IMR-90 (cell line): ENCODE measurements at regions of chr10 and their contacts with region 1.

Region 1: GRCh38 chr10:71957546-71958275 is 6.5 kb upstream of the CHST3 start:
- DNase-seq: no peak
- ATAC-seq: no peak
- H3K4me3 ChIP-seq: no peak overlapping the region
- H3K27ac ChIP-seq: no peak overlapping the region
- H3K4me1 ChIP-seq: no peaks in the 10 kb centered on the region
- H3K27me3 ChIP-seq: peaks cover 9% of the 10 kb centered on the region
- CTCF ChIP-seq: peak; percentile 28; the same call in 1 of the 2 replicates
- POLR2A ChIP-seq: no peak
- RAD21 ChIP-seq: no peak

Region 2: GRCh38 chr10:71899665-71900412 is 57.9 kb before region 1 on chr10:
- CTCF ChIA-PET with region 1: no interaction called
- POLR2A ChIA-PET with region 1: no interaction called
- dilution Hi-C with region 1: no loop called
- in situ Hi-C with region 1: no loop called
- intact Hi-C with region 1: loop called (anchors 5 kb)
- DNase-seq: no peak
- ATAC-seq: no peak
- H3K4me3 ChIP-seq: no peak overlapping the region
- H3K27ac ChIP-seq: no peak overlapping the region
- H3K4me1 ChIP-seq: no peaks in the 10 kb centered on the region
- H3K27me3 ChIP-seq: peaks cover 4% of the 10 kb centered on the region; the same call in 1 of the 2 replicates
- CTCF ChIP-seq: no peak
- POLR2A ChIP-seq: no peak
- RAD21 ChIP-seq: no peak

Region 3: GRCh38 chr10:71933651-71934050 is 24.1 kb before region 1 on chr10:
- CTCF ChIA-PET with region 1: no interaction called
- POLR2A ChIA-PET with region 1: no interaction called
- dilution Hi-C with region 1: no loop called
- in situ Hi-C with region 1: no loop called
- intact Hi-C with region 1: no loop called
- DNase-seq: no peak
- ATAC-seq: no peak
- H3K4me3 ChIP-seq: no peak overlapping the region
- H3K27ac ChIP-seq: no peak overlapping the region
- H3K4me1 ChIP-seq: peaks cover 3% of the 10 kb centered on the region
- H3K27me3 ChIP-seq: peaks cover 5% of the 10 kb centered on the region; the same call in 1 of the 2 replicates
- CTCF ChIP-seq: no peak
- POLR2A ChIP-seq: no peak
- RAD21 ChIP-seq: no peak

Region 4: GRCh38 chr10:72223743-72224101 is 266.0 kb after region 1 on chr10:
- CTCF ChIA-PET with region 1: interaction called, 3 read pairs
- POLR2A ChIA-PET with region 1: no interaction called
- dilution Hi-C with region 1: no loop called
- in situ Hi-C with region 1: no loop called
- intact Hi-C with region 1: loop called (anchors 2 kb)
- DNase-seq: peak; percentile 45
- ATAC-seq: no peak
- H3K4me3 ChIP-seq: no peak overlapping the region
- H3K27ac ChIP-seq: no peak overlapping the region; the same call in 1 of the 2 replicates
- H3K4me1 ChIP-seq: peaks cover 3% of the 10 kb centered on the region; the same call in 1 of the 2 replicates
- H3K27me3 ChIP-seq: no peaks in the 10 kb centered on the region
- CTCF ChIP-seq: no peak
- POLR2A ChIP-seq: no peak
- RAD21 ChIP-seq: no peak